ENCODE measurements at regions of chr5 and their contacts with region 1.

Region 1: GRCh38 chr5:75336625-75337339 is at the start of gene HMGCR:
- DNase-seq: peak; percentile 93 to 99 (median 97)
- ATAC-seq: peak; percentile 92
- H3K4me3 ChIP-seq: peak within 1 kb of the TSS; percentile 72 to 96
- H3K4me3 Mint-ChIP-seq: no peak within 1 kb of the TSS
- H3K27ac ChIP-seq: peak within 1 kb of the TSS; percentile 87 to 92
- H3K27ac Mint-ChIP-seq: no peak within 1 kb of the TSS
- H3K4me1 ChIP-seq: peaks cover 18% of the 10 kb centered on the region
- H3K4me1 Mint-ChIP-seq: peaks cover 35% of the 10 kb centered on the region
- H3K27me3 ChIP-seq: no peaks in the 10 kb centered on the region
- H3K27me3 Mint-ChIP-seq: no peaks in the 10 kb centered on the region
- CTCF ChIP-seq: no peak
- total RNA-seq, gene HMGCR: 72.8 to 73.3 TPM

Region 2: DNA sequence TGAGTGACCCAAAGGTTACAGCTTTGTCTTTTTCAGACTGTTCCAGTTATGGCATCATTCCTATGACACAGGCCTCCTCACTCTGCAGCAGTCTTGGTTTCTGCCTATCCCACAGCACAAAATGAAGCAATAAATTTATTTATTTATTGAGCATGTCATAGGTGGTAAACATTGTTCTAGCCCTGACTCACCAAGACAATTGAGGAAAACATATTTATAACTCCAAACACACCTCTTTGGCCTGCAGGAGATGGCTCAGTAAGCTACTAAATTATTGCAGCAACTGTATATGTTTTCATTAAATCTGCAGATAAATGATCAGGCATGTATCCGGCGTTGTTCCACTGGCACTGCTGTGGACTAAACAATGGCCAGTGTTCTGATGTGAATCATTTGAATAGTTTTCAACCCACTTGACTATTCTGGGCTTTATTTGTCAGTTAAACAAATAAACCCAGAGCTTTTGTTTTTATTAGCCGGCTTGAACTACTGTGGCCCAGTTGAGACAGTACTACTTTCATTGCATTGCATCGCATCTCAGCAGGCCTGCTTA is 1971.4 kb before region 1 on chr5:
- CTCF ChIA-PET with region 1: no interaction called
- POLR2A ChIA-PET with region 1: no interaction called
- intact Hi-C with region 1: no loop called
- DNase-seq: no peak
- ATAC-seq: no peak
- H3K4me3 ChIP-seq: no peak overlapping the region
- H3K4me3 Mint-ChIP-seq: no peak overlapping the region
- H3K27ac ChIP-seq: no peak overlapping the region
- H3K27ac Mint-ChIP-seq: no peak overlapping the region
- H3K4me1 ChIP-seq: no peaks in the 10 kb centered on the region
- H3K4me1 Mint-ChIP-seq: no peaks in the 10 kb centered on the region
- H3K27me3 ChIP-seq: peaks cover 0 to 3% of the 10 kb centered on the region in 2 experiments
- H3K27me3 Mint-ChIP-seq: peaks cover 50% of the 10 kb centered on the region
- CTCF ChIP-seq: no peak

Region 3: DNA sequence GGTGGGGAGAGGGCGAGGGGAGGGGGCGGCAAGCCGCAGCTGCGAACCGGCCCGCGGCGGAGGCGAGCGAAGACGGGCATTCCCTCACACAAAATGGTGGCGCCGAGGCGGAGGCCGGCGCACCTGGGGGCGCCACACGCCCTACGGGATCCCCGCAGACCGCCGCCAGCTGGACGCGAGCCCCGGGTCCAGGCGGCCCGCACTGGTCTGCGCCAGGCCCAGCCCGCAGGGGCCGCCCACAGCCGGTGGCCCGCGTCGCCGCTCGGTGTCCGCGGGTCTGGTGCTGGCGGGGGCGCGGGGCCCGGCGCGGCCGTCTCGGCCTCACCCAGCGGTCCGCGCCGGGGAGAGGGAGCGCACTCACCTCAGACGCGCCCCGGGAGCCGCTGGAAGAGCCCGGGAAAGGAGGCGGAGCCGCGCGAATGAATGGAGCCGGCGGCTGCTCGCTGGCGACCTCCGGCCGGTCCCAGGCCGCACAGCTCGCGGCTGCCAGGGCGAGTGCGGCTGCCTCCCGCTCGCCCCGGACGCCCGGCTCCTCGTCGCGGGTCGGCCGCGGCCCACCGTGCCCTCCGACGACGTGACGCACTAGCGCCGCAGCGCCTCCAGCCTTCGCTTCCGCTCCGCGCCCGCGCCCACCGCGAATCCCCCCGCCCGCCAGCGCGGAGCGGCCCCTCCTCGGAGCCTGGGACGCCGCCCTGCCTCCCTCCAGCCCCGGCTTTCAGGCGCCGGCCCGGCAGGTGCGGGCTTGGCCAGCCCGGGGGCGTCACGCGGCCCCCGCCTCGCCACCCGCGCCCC is 470.8 kb before region 1 on chr5 and contains the start of gene FAM169A:
- CTCF ChIA-PET with region 1: no interaction called
- POLR2A ChIA-PET with region 1: no interaction called
- intact Hi-C with region 1: loop called in 1 of 2 experiments (anchors 5 kb)
- DNase-seq: peak; percentile 22 to 81 (median 56)
- ATAC-seq: peak; percentile 74
- H3K4me3 ChIP-seq: peak within 1 kb of the TSS; percentile 78 to 86
- H3K4me3 Mint-ChIP-seq: peak within 1 kb of the TSS; percentile 94
- H3K27ac ChIP-seq: peak within 1 kb of the TSS; percentile 58 to 71
- H3K27ac Mint-ChIP-seq: peak within 1 kb of the TSS; percentile 92
- H3K4me1 ChIP-seq: peaks cover 24% of the 10 kb centered on the region
- H3K4me1 Mint-ChIP-seq: peaks cover 40% of the 10 kb centered on the region
- H3K27me3 ChIP-seq: no peaks in the 10 kb centered on the region
- H3K27me3 Mint-ChIP-seq: no peaks in the 10 kb centered on the region
- CTCF ChIP-seq: no peak
- total RNA-seq, gene FAM169A: 21.0 to 21.6 TPM

Region 4: GRCh38 chr5:74934949-74935751 is 401.6 kb before region 1 on chr5:
- CTCF ChIA-PET with region 1: no interaction called
- POLR2A ChIA-PET with region 1: no interaction called
- intact Hi-C with region 1: loop called in 1 of 2 experiments (anchors 5 kb)
- DNase-seq: peak in 7 of 9 experiments; percentile 7 to 60 (median 21)
- ATAC-seq: peak; percentile 71
- H3K4me3 ChIP-seq: peak overlapping the region; percentile 5 to 7
- H3K4me3 Mint-ChIP-seq: peak overlapping the region; percentile 73
- H3K27ac ChIP-seq: peak overlapping the region in 1 of 2 experiments; percentile 44
- H3K27ac Mint-ChIP-seq: peak overlapping the region; percentile 83
- H3K4me1 ChIP-seq: peaks cover 19% of the 10 kb centered on the region
- H3K4me1 Mint-ChIP-seq: peaks cover 26% of the 10 kb centered on the region
- H3K27me3 ChIP-seq: peaks cover 0 to 2% of the 10 kb centered on the region in 2 experiments
- H3K27me3 Mint-ChIP-seq: no peaks in the 10 kb centered on the region
- CTCF ChIP-seq: no peak

Region 5: DNA sequence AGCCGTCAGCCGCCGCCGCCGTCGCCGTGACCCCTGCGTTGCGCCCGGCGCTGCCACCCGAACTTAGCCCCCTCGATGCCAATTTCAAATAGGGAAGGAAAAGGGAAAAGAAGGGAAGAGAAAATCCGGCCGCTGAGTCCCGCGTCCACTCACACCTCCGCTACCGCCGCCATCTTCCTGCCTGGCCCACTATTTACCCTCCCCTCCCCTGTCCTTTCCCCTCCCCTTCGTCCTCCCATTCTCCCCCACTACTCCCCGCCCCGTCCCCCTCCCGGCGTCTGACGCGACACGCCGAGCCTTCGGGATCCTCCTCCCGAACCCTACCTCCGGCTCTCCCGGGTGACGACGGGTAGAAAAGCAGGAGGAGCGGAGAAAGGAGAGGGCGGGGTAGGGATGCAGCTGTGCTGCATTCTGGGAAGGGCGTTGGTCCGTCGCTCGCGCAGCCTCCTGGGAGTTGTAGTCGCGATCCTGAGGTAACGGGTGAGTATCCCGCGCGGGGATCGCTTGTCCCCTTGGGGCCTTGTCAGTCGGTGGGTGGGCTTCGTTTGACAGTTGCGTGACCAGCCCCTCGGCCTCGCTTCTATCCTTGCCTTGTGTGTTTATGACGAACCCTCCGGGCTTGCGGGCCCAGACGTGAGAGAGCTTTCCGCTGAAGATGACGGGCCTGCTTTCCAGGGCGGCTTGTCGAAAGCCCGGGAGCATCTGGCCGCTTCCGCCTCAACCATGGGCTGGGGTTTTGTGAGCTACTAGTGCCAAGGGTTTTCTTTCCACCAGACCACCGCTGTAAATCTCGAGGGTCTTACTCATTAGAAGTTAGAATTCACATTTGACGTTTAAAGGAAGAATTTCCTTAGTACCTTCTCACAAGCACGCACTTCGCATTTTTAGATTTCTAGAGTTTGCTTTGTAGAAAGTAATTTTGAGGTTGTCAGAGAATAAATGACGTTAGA is 174.9 kb after region 1 on chr5 and contains the starts of genes CERT1 and POLK:
- CTCF ChIA-PET with region 1: no interaction called
- POLR2A ChIA-PET with region 1: interaction called, 3 read pairs
- intact Hi-C with region 1: loop called (anchors 1 to 2 kb)
- DNase-seq: peak; percentile 78 to 97 (median 89)
- ATAC-seq: peak; percentile 87
- H3K4me3 ChIP-seq: peak within 1 kb of the TSS; percentile 72 to 79
- H3K4me3 Mint-ChIP-seq: peak within 1 kb of the TSS; percentile 96
- H3K27ac ChIP-seq: peak within 1 kb of the TSS; percentile 74 to 78
- H3K27ac Mint-ChIP-seq: peak within 1 kb of the TSS; percentile 97
- H3K4me1 ChIP-seq: peaks cover 29% of the 10 kb centered on the region
- H3K4me1 Mint-ChIP-seq: peaks cover 64% of the 10 kb centered on the region
- H3K27me3 ChIP-seq: no peaks in the 10 kb centered on the region
- H3K27me3 Mint-ChIP-seq: no peaks in the 10 kb centered on the region
- CTCF ChIP-seq: no peak
- total RNA-seq, gene CERT1: 29.2 to 36.4 TPM
- total RNA-seq, gene POLK: 6.9 to 10.0 TPM

Region 6: GRCh38 chr5:75717082-75717922 is 380.5 kb after region 1 on chr5 and contains the start of gene POC5:
- CTCF ChIA-PET with region 1: no interaction called
- POLR2A ChIA-PET with region 1: no interaction called
- intact Hi-C with region 1: loop called (anchors 2 to 5 kb)
- DNase-seq: peak; percentile 96 to 99 (median 98)
- ATAC-seq: peak; percentile 95
- H3K4me3 ChIP-seq: peak within 1 kb of the TSS; percentile 82 to 93
- H3K4me3 Mint-ChIP-seq: peak within 1 kb of the TSS; percentile 100
- H3K27ac ChIP-seq: peak within 1 kb of the TSS; percentile 69 to 88
- H3K27ac Mint-ChIP-seq: peak within 1 kb of the TSS; percentile 98
- H3K4me1 ChIP-seq: peaks cover 11% of the 10 kb centered on the region
- H3K4me1 Mint-ChIP-seq: peaks cover 39% of the 10 kb centered on the region
- H3K27me3 ChIP-seq: no peaks in the 10 kb centered on the region
- H3K27me3 Mint-ChIP-seq: no peaks in the 10 kb centered on the region
- CTCF ChIP-seq: no peak
- total RNA-seq, gene POC5: 6.5 to 7.9 TPM

Region 7: DNA sequence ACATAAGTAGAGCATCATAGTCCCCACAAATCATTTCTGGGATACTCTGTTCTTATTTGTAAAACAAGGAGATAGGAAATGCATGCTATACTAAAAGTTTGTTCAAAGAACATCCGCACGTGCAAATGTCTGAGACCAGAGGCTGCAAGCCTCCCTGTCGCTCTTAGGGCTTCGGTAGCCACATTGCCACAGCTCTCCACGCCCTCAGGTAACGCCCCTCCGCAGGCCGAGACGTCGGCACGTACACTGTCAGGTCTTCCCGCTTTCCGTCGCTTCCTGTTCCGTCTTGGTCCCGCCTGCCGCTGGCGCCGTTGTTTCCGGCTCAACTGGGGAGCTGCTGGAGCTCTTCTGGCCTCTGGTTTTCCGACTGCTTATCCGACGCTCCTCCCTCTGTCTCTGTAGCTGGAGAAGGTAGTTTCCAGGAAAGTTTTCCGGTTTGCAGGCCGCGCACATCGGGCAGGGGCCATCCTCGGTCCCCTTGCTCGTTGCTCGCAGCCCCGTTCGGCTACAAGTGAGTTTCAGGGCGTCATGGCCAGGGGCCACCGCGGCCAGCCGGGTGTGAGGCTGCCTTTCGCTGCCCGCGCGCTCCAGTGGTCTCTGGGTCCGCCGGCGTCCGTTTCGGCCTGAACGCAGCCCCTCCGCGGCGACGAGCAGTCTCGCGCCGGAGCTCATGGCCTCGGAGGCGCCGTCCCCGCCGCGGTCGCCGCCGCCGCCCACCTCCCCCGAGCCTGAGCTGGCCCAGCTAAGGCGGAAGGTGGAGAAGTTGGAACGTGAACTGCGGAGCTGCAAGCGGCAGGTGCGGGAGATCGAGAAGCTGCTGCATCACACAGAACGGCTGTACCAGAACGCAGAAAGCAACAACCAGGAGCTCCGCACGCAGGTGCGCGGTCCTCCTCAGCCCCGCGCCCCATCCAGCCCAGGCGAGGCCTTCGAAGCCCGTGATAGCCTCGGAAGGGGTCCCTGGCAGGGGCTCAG is 1693.6 kb after region 1 on chr5 and contains the start of gene AGGF1:
- CTCF ChIA-PET with region 1: no interaction called
- POLR2A ChIA-PET with region 1: no interaction called
- intact Hi-C with region 1: loop called (anchors 2 kb)
- DNase-seq: peak; percentile 78 to 95 (median 92)
- ATAC-seq: peak; percentile 98
- H3K4me3 ChIP-seq: peak within 1 kb of the TSS; percentile 84 to 94
- H3K4me3 Mint-ChIP-seq: peak within 1 kb of the TSS; percentile 90
- H3K27ac ChIP-seq: peak within 1 kb of the TSS; percentile 69 to 85
- H3K27ac Mint-ChIP-seq: peak within 1 kb of the TSS; percentile 94
- H3K4me1 ChIP-seq: peaks cover 21% of the 10 kb centered on the region
- H3K4me1 Mint-ChIP-seq: peaks cover 43% of the 10 kb centered on the region
- H3K27me3 ChIP-seq: no peaks in the 10 kb centered on the region
- H3K27me3 Mint-ChIP-seq: no peaks in the 10 kb centered on the region
- CTCF ChIP-seq: no peak
- total RNA-seq, gene AGGF1: 14.8 to 14.9 TPM